SK-N-SH (cell line): ENCODE measurements at regions of chr20 and their contacts with region 1.

Region 1: GRCh38 chr20:31723319-31724078 is 831 bp upstream of the BCL2L1 start:
- DNase-seq: peak; percentile 99
- H3K4me3 ChIP-seq: peak overlapping the region; percentile 59 to 81
- H3K27ac ChIP-seq: peak overlapping the region; percentile 98 to 100
- H3K4me1 ChIP-seq: peaks cover 18 to 35% of the 10 kb centered on the region in 2 experiments
- H3K27me3 ChIP-seq: no peaks in the 10 kb centered on the region
- CTCF ChIP-seq: peak; percentile 94
- EP300 ChIP-seq: no peak
- RAD21 ChIP-seq: peak; percentile 94

Region 2: DNA sequence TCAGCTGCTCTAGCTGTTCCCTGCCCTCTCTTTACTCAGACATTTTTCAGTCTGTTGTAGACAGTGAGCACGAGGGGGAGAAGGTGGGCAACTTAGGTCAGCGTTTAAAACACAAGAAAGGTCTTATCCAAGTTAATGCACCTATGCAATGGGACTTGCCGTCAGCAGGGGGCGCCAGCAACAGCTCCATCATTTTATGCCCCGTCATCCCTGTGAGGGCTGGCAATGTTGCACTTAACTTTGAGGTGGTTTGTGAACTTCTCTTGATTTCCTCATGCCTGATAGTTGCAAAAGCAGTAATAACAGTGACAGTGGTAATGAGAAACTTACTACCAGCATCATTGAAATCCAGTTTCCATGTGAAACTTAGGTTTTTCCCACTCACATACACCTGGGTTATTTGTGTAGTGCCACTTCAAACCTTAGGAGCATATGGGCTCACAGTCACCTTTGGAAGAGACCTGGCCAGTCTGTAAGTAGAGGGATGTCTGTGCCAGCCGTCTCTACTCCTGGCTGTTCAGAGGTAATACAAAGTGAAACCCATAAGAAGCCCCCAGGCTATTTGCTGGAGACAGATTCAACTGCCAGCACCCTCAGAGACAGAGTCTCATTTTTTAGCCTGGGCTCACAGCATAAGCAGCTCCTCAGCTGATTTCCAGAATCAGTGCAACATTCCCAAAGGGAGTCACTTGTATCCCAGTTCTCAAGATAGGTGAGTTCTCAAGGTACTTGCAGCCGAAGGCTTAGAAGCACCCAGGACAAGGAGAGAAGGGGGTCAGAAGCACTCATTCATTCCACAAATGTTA is 163.2 kb before region 1 on chr20:
- CTCF ChIA-PET with region 1: interaction called, 31 read pairs
- POLR2A ChIA-PET with region 1: interaction called, 7 read pairs
- DNase-seq: peak; percentile 68
- H3K4me3 ChIP-seq: peak overlapping the region in 1 of 2 experiments; percentile 54; a peak in 1 of 4 replicates
- H3K27ac ChIP-seq: peak overlapping the region; percentile 73 to 96
- H3K4me1 ChIP-seq: peaks cover 15 to 33% of the 10 kb centered on the region in 2 experiments
- H3K27me3 ChIP-seq: no peaks in the 10 kb centered on the region
- CTCF ChIP-seq: peak; percentile 98
- EP300 ChIP-seq: no peak
- RAD21 ChIP-seq: peak; percentile 55

Region 3: DNA sequence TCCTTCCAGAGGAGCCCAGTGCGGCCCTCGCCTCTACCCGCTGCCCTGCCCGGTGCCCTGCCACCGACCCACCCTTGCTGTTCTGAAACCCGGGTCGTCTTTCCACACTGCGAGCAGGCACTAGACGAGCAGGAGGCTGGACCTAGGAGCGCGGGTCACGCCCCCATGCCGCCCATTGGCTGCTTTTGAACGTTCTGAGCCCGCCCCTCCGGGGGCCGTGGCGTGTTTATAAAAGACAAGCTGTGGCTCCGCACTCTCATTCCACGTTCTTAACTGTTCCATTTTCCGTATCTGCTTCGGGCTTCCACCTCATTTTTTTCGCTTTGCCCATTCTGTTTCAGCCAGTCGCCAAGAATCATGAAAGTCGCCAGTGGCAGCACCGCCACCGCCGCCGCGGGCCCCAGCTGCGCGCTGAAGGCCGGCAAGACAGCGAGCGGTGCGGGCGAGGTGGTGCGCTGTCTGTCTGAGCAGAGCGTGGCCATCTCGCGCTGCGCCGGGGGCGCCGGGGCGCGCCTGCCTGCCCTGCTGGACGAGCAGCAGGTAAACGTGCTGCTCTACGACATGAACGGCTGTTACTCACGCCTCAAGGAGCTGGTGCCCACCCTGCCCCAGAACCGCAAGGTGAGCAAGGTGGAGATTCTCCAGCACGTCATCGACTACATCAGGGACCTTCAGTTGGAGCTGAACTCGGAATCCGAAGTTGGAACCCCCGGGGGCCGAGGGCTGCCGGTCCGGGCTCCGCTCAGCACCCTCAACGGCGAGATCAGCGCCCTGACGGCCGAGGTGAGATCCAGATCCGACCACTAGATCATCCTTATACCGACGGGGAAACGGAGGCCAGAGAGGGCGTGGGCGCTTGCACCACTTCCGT is 118.2 kb before region 1 on chr20 and contains the start of gene ID1:
- CTCF ChIA-PET with region 1: interaction called, 72 read pairs
- POLR2A ChIA-PET with region 1: interaction called, 4 read pairs
- DNase-seq: peak; percentile 92
- H3K4me3 ChIP-seq: peak within 1 kb of the TSS; percentile 80 to 96
- H3K27ac ChIP-seq: peak within 1 kb of the TSS; percentile 97 to 100
- H3K4me1 ChIP-seq: peaks cover 22 to 31% of the 10 kb centered on the region in 2 experiments
- H3K27me3 ChIP-seq: no peaks in the 10 kb centered on the region
- CTCF ChIP-seq: no peak
- EP300 ChIP-seq: 0 out of 4 replicates have a peak, but pooled peaks of 1 of the 2 experiments have one; percentile 6
- RAD21 ChIP-seq: no peak
- polyA plus RNA-seq, gene ID1: 324 and 493 TPM in 2 replicates

Region 4: DNA sequence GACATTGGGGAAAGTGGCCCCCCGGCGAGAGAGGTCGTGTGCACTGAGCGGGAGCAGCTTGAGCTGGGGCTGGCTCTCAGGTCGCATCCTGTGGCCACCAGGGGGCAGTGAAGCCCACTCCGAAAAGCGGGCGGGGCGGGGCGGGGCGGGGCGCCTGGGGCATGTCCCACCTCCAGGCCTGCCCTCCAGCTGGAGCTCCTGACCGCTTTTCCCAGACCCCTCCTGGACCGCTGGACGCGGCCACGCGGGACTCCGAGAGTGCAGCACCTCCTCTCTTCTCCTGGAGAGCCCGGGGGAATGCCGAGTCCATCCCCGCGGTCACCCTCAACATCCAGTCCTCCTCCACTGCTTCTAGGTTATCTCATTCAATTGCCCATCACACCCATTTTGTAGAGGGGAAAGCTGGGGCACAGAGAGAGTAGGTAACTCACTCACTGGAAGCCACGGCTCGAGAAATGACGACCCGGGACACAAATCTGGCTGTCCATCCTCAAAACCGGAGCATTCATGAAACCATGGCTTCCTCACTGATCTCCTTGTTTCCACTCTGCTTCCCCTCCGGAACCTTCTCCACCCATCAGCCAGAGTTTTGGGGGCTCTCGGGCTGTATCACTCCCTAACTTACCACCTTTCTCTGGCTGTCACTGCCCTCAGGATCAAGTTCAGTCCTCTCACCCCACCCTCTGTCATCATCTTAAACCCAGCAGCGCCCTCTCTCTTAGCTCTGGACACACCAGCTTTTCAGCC is 61.7 kb before region 1 on chr20:
- CTCF ChIA-PET with region 1: interaction called, 288 read pairs
- POLR2A ChIA-PET with region 1: interaction called, 31 read pairs
- DNase-seq: peak; percentile 91
- H3K4me3 ChIP-seq: peak overlapping the region; percentile 10 to 46; a peak in 2 of 4 replicates
- H3K27ac ChIP-seq: peak overlapping the region; percentile 58 to 66; a peak in 3 of 4 replicates
- H3K4me1 ChIP-seq: peaks cover 6 to 32% of the 10 kb centered on the region in 2 experiments; a peak in 3 of 4 replicates
- H3K27me3 ChIP-seq: no peaks in the 10 kb centered on the region
- CTCF ChIP-seq: peak; percentile 63
- EP300 ChIP-seq: no peak
- RAD21 ChIP-seq: peak; percentile 60

Region 5: DNA sequence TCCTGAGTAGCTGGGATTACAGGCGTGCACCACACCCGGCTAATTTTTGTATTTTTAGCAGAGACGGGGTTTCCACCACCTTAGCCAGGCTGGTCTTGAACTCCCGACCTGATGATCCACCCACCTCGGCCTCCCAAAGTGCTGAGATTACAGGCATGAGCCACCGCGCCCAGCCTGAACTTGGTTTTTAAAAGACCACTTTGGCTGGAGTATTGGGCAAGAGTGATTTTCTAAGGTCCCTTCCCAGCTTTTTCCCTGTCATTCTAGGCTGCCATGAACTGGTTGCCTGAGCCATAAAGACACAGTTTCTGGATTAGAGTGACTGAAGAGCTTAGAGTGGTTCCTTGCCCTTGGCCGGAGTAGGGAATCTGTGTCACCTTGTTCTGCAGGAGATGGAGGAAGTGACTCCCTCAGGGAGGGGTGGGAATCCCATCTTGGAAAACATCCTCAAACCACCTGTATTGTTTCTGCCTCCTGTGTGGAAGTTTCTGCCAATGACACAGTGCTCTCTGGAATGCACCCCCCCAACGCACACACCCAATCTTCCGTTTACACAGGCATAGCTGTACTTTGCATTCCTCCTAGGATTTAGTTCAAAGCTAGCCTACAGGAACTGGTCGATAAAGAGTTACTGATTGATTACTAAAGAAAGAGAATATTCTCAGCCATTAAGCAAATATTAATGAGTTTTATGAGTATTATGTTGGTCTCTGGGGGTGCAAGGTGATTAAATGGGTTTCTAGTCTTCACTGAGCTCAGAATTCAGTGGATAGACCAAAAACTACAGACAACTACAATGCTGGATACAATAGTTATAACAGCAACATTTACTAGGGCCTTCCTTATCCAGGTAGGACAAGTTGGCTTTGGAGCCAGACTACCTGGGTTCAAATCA is 19.0 kb before region 1 on chr20:
- CTCF ChIA-PET with region 1: interaction called, 18 read pairs
- POLR2A ChIA-PET with region 1: no interaction called
- DNase-seq: no peak
- H3K4me3 ChIP-seq: no peak overlapping the region
- H3K27ac ChIP-seq: peak overlapping the region; percentile 35 to 80; a peak in 3 of 4 replicates
- H3K4me1 ChIP-seq: peaks cover under 1 to 14% of the 10 kb centered on the region in 2 experiments; a peak in 3 of 4 replicates
- H3K27me3 ChIP-seq: no peaks in the 10 kb centered on the region
- CTCF ChIP-seq: no peak
- EP300 ChIP-seq: peak in 1 of 2 experiments; percentile 77; a peak in 1 of 4 replicates
- RAD21 ChIP-seq: no peak

Region 6: GRCh38 chr20:31747640-31748039 is 24.1 kb after region 1 on chr20:
- CTCF ChIA-PET with region 1: interaction called, 30 read pairs
- POLR2A ChIA-PET with region 1: no interaction called
- DNase-seq: peak; percentile 49
- H3K4me3 ChIP-seq: no peak overlapping the region
- H3K27ac ChIP-seq: peak overlapping the region; percentile 16 to 36; a peak in 2 of 4 replicates
- H3K4me1 ChIP-seq: peaks cover 4 to 6% of the 10 kb centered on the region in 2 experiments; a peak in 1 of 4 replicates
- H3K27me3 ChIP-seq: no peaks in the 10 kb centered on the region
- CTCF ChIP-seq: no peak
- EP300 ChIP-seq: no peak
- RAD21 ChIP-seq: no peak